Activated CD8-positive, alpha-beta T cell treated with anti-CD3 and anti-CD28 coated beads, Interleukin-2, amount 10 ng/mL, durations not matched to agents 7 days and 5 days (primary cell): ENCODE measurements at regions of chr3 and their contacts with region 1.

Region 1: GRCh38 chr3:105836533-105836932 is 32.3 kb downstream of the CBLB start:
- DNase-seq: peak; percentile 42
- ATAC-seq: no peak
- H3K4me3 Mint-ChIP-seq: peak overlapping the region; percentile 16
- H3K27ac Mint-ChIP-seq: peak overlapping the region; percentile 32
- H3K4me1 Mint-ChIP-seq: peaks cover 69% of the 10 kb centered on the region
- H3K27me3 Mint-ChIP-seq: no peaks in the 10 kb centered on the region

Region 2: DNA sequence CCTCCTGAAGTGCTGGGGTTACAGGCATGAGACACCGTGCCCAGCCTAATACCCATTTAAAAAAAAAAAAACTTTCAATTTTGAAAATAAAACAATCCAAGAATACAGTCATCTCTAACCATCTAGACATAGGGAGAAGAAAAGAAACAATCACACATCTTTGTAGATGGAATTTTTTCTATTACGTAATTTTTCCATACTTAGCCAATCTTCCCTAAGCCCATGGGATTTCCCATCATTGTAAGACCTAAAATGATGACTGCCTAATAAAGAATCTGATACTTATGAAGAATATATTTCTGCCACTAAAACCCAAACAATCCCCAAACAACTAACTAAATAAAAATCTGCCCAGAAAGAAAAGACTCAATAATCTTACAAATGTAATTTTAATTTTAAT is 56.4 kb before region 1 on chr3:
- CTCF ChIA-PET with region 1: no interaction called
- POLR2A ChIA-PET with region 1: no interaction called
- DNase-seq: no peak
- ATAC-seq: no peak
- H3K4me3 Mint-ChIP-seq: no peak overlapping the region
- H3K27ac Mint-ChIP-seq: no peak overlapping the region
- H3K4me1 Mint-ChIP-seq: peaks cover 52% of the 10 kb centered on the region
- H3K27me3 Mint-ChIP-seq: no peaks in the 10 kb centered on the region

Region 3: DNA sequence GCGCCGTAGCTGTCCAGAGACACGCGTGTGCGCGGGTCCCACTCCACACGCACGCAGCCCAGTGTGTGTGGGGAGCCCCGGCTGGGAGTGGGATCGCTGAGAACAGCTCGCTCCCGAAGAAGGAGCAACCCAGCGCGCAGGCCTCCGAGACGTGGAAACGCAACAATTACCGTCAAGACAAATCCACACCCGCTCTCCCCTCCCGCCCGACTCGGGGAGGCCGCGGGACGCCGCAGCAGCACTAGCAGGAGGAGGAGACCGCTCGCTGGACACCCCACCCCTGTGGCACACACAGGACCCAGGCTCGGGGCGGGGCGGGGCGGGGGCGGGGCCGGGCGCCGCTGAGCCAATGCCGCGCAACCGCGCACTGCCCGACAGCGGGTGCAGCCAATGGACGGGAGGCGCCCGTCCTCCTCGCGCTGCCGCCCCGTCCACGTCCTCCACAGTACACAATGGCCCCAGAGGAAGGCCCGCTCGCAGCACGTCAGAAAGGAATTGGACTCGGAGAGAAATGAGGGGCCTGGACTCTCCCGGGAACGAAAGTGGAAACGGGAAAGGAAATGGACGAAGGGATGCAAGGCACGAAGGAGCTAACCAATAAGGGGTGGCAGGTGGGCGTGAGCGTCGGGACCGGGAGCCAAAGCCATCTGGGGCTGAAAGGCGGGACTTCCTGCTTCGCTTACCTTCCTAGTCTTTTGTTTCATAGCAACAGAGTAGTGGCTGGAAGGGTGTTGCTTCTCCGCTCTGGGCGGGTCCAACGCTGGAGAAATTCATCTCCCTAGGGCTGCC is 32.4 kb after region 1 on chr3 and contains the start of gene CBLB:
- CTCF ChIA-PET with region 1: interaction called, 4 read pairs
- POLR2A ChIA-PET with region 1: interaction called, 12 read pairs
- DNase-seq: peak; percentile 89
- ATAC-seq: peak; percentile 90
- H3K4me3 Mint-ChIP-seq: peak within 1 kb of the TSS; percentile 96
- H3K27ac Mint-ChIP-seq: peak within 1 kb of the TSS; percentile 90
- H3K4me1 Mint-ChIP-seq: peaks cover 40% of the 10 kb centered on the region
- H3K27me3 Mint-ChIP-seq: no peaks in the 10 kb centered on the region
- total RNA-seq, gene CBLB: 117 to 122 TPM